ENCODE measurements at regions of chr18 and their contacts with region 1.

Region 1: GRCh38 chr18:49561289-49562193 is at the start of gene LIPG:
- DNase-seq: peak; percentile 93
- H3K4me3 ChIP-seq: peak within 1 kb of the TSS; percentile 45
- H3K27ac ChIP-seq: peak within 1 kb of the TSS; percentile 51
- H3K4me1 ChIP-seq: peaks cover 6% of the 10 kb centered on the region
- H3K27me3 ChIP-seq: no peaks in the 10 kb centered on the region
- CTCF ChIP-seq: no peak
- total RNA-seq, gene LIPG: 25.5 to 32.1 TPM

Region 2: GRCh38 chr18:49416511-49416910 is 145.0 kb before region 1 on chr18:
- intact Hi-C with region 1: no loop called
- DNase-seq: no peak
- H3K4me3 ChIP-seq: no peak overlapping the region
- H3K27ac ChIP-seq: no peak overlapping the region
- H3K4me1 ChIP-seq: no peaks in the 10 kb centered on the region
- H3K27me3 ChIP-seq: no peaks in the 10 kb centered on the region
- CTCF ChIP-seq: no peak

Region 3: GRCh38 chr18:49728542-49728941 is 167.0 kb after region 1 on chr18:
- intact Hi-C with region 1: loop called (anchors 2 kb)
- DNase-seq: peak; percentile 84
- H3K4me3 ChIP-seq: no peak overlapping the region
- H3K27ac ChIP-seq: no peak overlapping the region
- H3K4me1 ChIP-seq: peaks cover 8% of the 10 kb centered on the region
- H3K27me3 ChIP-seq: no peaks in the 10 kb centered on the region
- CTCF ChIP-seq: peak; percentile 64

Region 4: GRCh38 chr18:49858309-49859020 is 296.9 kb after region 1 on chr18:
- intact Hi-C with region 1: loop called (anchors 5 kb)
- DNase-seq: peak; percentile 79
- H3K4me3 ChIP-seq: no peak overlapping the region
- H3K27ac ChIP-seq: peak overlapping the region; percentile 93
- H3K4me1 ChIP-seq: peaks cover 5% of the 10 kb centered on the region
- H3K27me3 ChIP-seq: no peaks in the 10 kb centered on the region
- CTCF ChIP-seq: peak; percentile 93

Region 5: GRCh38 chr18:50266248-50266704 is 704.7 kb after region 1 on chr18 and contains the start of gene CFAP53:
- intact Hi-C with region 1: no loop called
- DNase-seq: peak; percentile 93
- H3K4me3 ChIP-seq: peak within 1 kb of the TSS; percentile 54
- H3K27ac ChIP-seq: no peak within 1 kb of the TSS
- H3K4me1 ChIP-seq: no peaks in the 10 kb centered on the region
- H3K27me3 ChIP-seq: no peaks in the 10 kb centered on the region
- CTCF ChIP-seq: no peak
- total RNA-seq, gene CFAP53: 0.16 to 0.44 TPM